Mammary epithelial cell (primary cell): ENCODE measurements at regions of chr12 and their contacts with region 1.

Region 1: DNA sequence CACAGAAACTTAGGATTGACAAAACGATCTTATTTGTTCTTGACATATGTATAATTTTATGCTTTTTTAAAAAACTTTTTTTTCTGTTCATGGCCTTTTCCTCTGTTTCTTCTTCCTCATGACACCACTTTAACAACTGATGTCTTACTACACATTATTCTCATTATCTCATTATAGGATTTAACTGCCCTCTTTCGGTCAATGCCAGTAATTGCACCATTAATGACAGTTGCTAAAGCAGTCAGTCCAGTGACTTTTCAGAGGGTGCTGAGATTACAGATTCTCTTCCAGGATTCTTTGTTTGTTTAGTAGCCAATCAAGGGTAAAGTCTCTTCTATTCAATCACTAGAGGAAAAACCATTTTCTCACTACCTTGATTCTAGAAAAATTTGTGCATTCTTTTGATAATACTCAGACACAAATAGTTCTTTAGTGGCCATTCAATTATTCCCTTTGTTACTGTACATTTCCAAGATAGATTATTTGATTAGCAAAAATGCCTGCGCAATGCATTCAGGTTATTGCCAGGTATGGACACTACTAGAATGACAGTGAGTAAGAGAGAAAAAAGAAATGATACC is 50.1 kb downstream of the KLRG1 start:
- DNase-seq: peak; percentile 36
- H3K4me3 ChIP-seq: no peak overlapping the region
- H3K27ac ChIP-seq: no peak overlapping the region
- H3K4me1 ChIP-seq: no peaks in the 10 kb centered on the region
- H3K27me3 ChIP-seq: peaks cover 2% of the 10 kb centered on the region
- CTCF ChIP-seq: peak; percentile 64 to 88

Region 2: DNA sequence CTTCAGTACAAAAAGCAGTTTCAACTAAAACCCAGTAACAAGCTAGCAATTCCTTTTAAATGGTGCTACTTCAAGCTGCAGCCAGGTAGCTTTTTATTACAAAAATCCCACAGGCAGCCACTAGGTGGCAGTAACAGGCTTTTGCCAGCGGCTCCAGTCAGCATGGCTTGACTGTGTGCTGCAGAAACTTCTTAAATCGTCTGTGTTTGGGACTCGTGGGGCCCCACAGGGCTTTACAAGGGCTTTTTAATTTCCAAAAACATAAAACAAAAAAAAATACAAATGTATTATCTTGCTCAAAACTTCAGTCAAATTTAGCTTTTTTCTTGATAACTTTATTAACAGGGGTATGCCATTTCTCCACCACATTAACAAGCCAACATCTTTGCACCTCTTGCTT is 495.2 kb before region 1 on chr12:
- CTCF ChIA-PET with region 1: no interaction called
- dilution Hi-C with region 1: no loop called
- in situ Hi-C with region 1: loop called in 1 of 2 experiments (anchors 25 kb)
- intact Hi-C with region 1: loop called (anchors 5 kb)
- DNase-seq: peak; percentile 44
- H3K4me3 ChIP-seq: no peak overlapping the region
- H3K27ac ChIP-seq: no peak overlapping the region
- H3K4me1 ChIP-seq: no peaks in the 10 kb centered on the region
- H3K27me3 ChIP-seq: no peaks in the 10 kb centered on the region
- CTCF ChIP-seq: peak; percentile 74 to 85

Region 3: DNA sequence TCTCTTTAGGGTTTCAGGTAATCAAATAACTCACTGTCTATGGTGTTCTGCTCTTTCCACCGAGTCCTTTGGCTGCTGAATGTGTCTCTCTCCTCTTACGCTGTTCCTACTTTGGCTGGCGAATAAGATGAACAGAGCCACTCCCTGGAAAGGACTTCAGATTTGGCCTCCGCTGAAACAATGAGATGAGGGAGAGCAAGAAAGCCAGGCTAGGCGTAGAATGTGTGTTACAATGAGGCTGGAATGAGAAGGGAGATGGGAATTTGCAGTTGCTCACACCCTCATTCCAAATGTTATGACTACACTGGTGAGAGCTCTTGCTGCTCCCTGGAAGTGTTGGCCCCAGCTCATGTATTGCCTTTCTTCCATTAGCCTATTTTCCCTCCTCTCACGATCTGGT is 376.9 kb before region 1 on chr12 and contains the start of gene MFAP5:
- CTCF ChIA-PET with region 1: interaction called, 15 read pairs
- dilution Hi-C with region 1: no loop called
- in situ Hi-C with region 1: loop called (anchors 10 kb)
- intact Hi-C with region 1: loop called (anchors 2 kb)
- DNase-seq: no peak
- H3K4me3 ChIP-seq: no peak within 1 kb of the TSS
- H3K27ac ChIP-seq: no peak within 1 kb of the TSS
- H3K4me1 ChIP-seq: peaks cover 21% of the 10 kb centered on the region
- H3K27me3 ChIP-seq: no peaks in the 10 kb centered on the region
- CTCF ChIP-seq: no peak
- total RNA-seq, gene MFAP5: 2.4 to 7.5 TPM

Region 4: DNA sequence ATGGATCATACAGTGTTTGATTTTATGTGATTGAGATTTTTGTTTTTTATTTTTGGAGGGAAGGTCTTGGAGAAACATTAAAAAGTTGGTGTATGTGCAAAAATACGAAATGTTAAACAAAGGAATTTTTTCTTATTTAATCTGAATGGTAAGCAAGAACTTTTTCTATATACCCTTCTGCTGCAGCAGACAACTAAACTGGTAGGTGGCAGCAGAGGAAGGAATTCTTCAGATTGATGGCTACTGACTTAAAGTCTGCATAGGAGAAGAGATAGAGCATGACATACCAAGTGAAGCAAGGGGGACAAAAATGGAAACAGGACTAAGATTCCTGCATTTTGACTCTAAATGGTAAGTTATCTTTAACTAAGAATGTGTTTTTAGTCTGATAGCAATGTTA is 259.1 kb before region 1 on chr12:
- CTCF ChIA-PET with region 1: no interaction called
- dilution Hi-C with region 1: no loop called
- in situ Hi-C with region 1: no loop called
- intact Hi-C with region 1: loop called (anchors 10 kb)
- DNase-seq: peak; percentile 40
- H3K4me3 ChIP-seq: no peak overlapping the region
- H3K27ac ChIP-seq: no peak overlapping the region
- H3K4me1 ChIP-seq: no peaks in the 10 kb centered on the region
- H3K27me3 ChIP-seq: no peaks in the 10 kb centered on the region
- CTCF ChIP-seq: peak; percentile 39 to 71

Region 5: DNA sequence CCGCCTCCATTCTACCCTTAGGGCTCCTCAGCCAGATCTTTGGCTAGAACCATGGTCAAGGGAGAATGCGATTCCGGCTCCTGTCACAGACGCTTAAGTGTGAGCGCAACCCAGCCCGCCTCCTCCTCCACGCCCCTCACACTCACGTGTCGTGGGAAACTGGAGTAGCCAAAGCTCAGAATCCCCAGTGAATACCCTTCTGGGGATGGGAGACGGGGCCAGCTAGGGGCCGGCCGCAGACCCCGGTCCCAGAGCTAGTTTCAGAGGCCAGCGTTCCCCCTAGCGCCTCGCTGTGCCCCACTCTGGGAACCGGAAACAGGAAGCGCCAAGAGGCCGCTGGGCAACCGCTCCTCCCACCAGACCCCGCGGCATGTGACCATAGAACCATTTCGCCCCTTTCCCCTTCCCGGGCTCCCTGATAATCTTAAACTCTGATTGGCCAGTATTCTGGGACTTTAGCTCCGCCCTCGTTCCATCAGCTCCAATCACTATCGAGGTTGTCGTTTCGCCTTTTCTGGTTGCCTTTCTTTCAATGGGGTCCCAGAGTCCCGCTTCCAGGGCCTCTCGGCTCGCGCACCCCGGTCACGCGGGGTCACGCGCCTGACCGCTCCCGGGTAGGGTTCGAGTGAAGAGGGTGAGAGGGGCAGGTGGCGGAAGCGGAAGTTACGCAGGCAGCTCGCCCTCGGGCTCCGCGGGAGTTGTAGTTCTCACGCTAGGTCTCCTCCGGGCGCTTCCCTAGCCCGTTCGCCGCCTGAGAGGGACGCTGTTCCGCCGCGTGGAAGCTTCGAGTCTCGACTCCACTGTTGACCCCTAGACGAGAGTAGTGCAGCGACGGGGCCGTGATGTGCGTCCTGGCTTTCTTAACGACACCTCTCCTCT is 89.9 kb before region 1 on chr12 and contains the start of gene M6PR:
- CTCF ChIA-PET with region 1: no interaction called
- dilution Hi-C with region 1: no loop called
- in situ Hi-C with region 1: loop called in 1 of 2 experiments (anchors 10 kb)
- intact Hi-C with region 1: loop called (anchors 1 kb)
- DNase-seq: peak; percentile 97
- H3K4me3 ChIP-seq: peak within 1 kb of the TSS; percentile 72 to 97 (median 96)
- H3K27ac ChIP-seq: peak within 1 kb of the TSS; percentile 92
- H3K4me1 ChIP-seq: peaks cover 8% of the 10 kb centered on the region
- H3K27me3 ChIP-seq: no peaks in the 10 kb centered on the region
- CTCF ChIP-seq: peak; percentile 47 to 67
- total RNA-seq, gene M6PR: 117 to 165 TPM